Common myeloid progenitor, CD34-positive (primary cell): ENCODE measurements at regions of chr5 and their contacts with region 1.

Region 1: DNA sequence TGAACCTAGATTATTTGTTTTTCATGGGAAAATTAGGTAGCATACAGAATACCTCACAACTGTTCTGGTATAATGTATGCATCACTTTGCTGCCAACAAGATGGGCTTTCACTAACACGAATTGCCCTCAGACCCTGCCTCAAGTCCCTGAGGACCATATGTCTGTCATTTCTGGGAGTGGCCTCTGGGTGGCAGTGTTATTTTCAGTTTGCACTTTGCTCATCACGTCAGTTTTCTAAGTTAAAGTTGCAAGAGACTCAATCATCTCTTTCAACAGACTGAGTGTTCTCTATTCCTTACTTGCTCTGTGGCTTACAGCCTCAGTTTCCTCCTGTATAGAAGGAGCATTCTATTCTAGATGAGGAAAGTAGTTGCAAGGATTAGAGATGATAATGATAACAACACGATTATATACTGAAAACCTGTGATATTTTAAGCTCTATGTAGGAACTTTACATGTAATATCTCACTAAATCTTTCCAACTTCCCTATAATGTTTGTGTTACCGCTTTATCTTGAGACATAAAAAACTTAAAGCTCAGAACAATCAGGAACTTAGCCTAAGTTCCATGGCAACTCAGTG is 55.7 kb downstream of the TSSK1B start:
- DNase-seq: peak; percentile 68 to 79 (median 70)
- H3K4me3 ChIP-seq: peak overlapping the region in 1 of 7 experiments; percentile 6
- H3K27ac ChIP-seq: no peak overlapping the region
- H3K4me1 ChIP-seq: peaks cover 10 to 20% (median 17%) of the 10 kb centered on the region in 4 experiments
- H3K27me3 ChIP-seq: peaks cover 22 to 82% (median 50%) of the 10 kb centered on the region in 5 experiments

Region 2: DNA sequence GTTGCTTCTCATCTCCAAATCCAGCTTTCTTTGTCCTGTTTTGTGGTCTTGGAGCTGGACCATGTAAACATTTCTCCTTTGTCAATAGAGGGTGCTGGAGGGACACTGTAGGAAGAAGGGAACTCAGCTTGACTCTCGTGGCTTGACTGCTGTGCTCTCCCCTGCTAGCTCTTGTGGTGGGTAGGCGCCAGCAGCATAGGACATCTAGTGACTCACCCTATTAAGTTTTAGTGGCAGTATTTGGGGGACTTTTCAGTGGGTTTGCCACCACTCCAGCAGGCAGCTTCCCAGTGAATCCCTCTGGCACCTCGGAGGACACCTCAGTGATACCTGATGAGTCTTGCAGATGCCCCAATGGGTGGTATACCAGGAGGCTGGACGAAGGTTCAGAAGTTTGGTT is 42.1 kb before region 1 on chr5:
- CTCF ChIA-PET with region 1: interaction called, 12 read pairs
- POLR2A ChIA-PET with region 1: no interaction called
- DNase-seq: peak; percentile 72 to 83 (median 77)
- H3K4me3 ChIP-seq: no peak overlapping the region
- H3K27ac ChIP-seq: no peak overlapping the region
- H3K4me1 ChIP-seq: no peaks in the 10 kb centered on the region
- H3K27me3 ChIP-seq: peaks cover 8 to 63% (median 23%) of the 10 kb centered on the region in 5 experiments

Region 3: DNA sequence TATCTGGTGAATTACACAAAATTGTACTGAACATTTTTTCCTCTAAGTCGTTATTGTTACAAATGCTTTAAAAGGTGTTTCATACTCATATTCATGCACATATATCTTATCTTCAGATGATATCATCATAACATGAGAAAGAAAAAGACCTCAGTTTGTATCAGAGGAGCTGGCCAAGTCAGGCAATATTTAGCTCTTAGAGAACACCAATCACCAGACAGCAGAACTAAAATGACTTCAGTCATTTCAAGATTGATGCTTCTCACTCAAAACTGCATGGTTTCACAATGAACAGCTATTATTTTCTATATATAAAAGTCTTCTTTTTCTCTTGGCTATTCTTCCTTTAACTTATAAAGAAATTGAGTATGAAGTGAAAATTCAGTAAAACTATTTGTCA is 11.2 kb after region 1 on chr5:
- CTCF ChIA-PET with region 1: interaction called, 22 read pairs
- POLR2A ChIA-PET with region 1: no interaction called
- DNase-seq: no peak
- H3K4me3 ChIP-seq: no peak overlapping the region
- H3K27ac ChIP-seq: no peak overlapping the region
- H3K4me1 ChIP-seq: no peaks in the 10 kb centered on the region
- H3K27me3 ChIP-seq: peaks cover 14 to 93% (median 42%) of the 10 kb centered on the region in 5 experiments

Region 4: GRCh38 chr5:113447498-113448050 is 68.5 kb after region 1 on chr5:
- CTCF ChIA-PET with region 1: no interaction called
- POLR2A ChIA-PET with region 1: no interaction called
- DNase-seq: peak in 2 of 3 donors; percentile 8 to 10
- H3K4me3 ChIP-seq: no peak overlapping the region
- H3K27ac ChIP-seq: no peak overlapping the region
- H3K4me1 ChIP-seq: no peaks in the 10 kb centered on the region
- H3K27me3 ChIP-seq: peaks cover 5 to 79% (median 30%) of the 10 kb centered on the region in 5 experiments

Region 5: GRCh38 chr5:113513384-113514288 is 134.6 kb after region 1 on chr5 and contains the start of gene YTHDC2:
- CTCF ChIA-PET with region 1: interaction called, 12 read pairs
- POLR2A ChIA-PET with region 1: no interaction called
- DNase-seq: peak; percentile 89 to 94 (median 90)
- H3K4me3 ChIP-seq: peak within 1 kb of the TSS; percentile 79 to 93 (median 85)
- H3K27ac ChIP-seq: peak within 1 kb of the TSS; percentile 64 to 83
- H3K4me1 ChIP-seq: peaks cover 3 to 8% (median 6%) of the 10 kb centered on the region in 4 experiments
- H3K27me3 ChIP-seq: peaks cover 0 to 34% (median 8%) of the 10 kb centered on the region in 5 experiments